PC-9 (cell line): ENCODE measurements at regions of chr19 and their contacts with region 1.

Region 1: GRCh38 chr19:11293433-11294389 is 2.2 kb upstream of the TSPAN16 start:
- DNase-seq: peak; percentile 93 to 99
- H3K4me3 ChIP-seq: peak overlapping the region; percentile 37; the same call in 1 of the 2 replicates
- H3K27ac ChIP-seq: 0 out of 2 replicates have a peak overlapping the region, but pooled peaks have one; percentile 30
- H3K4me1 ChIP-seq: peaks cover 30% of the 10 kb centered on the region
- H3K27me3 ChIP-seq: no peaks in the 10 kb centered on the region
- CTCF ChIP-seq: peak; percentile 99

Region 2: GRCh38 chr19:11264452-11265176 is 29.1 kb before region 1 on chr19:
- CTCF ChIA-PET with region 1: interaction called, 16 read pairs
- POLR2A ChIA-PET with region 1: no interaction called
- intact Hi-C with region 1: no loop called
- DNase-seq: peak; percentile 90 to 94
- H3K4me3 ChIP-seq: no peak overlapping the region
- H3K27ac ChIP-seq: peak overlapping the region; percentile 62
- H3K4me1 ChIP-seq: peaks cover 24% of the 10 kb centered on the region
- H3K27me3 ChIP-seq: no peaks in the 10 kb centered on the region
- CTCF ChIP-seq: no peak

Region 3: DNA sequence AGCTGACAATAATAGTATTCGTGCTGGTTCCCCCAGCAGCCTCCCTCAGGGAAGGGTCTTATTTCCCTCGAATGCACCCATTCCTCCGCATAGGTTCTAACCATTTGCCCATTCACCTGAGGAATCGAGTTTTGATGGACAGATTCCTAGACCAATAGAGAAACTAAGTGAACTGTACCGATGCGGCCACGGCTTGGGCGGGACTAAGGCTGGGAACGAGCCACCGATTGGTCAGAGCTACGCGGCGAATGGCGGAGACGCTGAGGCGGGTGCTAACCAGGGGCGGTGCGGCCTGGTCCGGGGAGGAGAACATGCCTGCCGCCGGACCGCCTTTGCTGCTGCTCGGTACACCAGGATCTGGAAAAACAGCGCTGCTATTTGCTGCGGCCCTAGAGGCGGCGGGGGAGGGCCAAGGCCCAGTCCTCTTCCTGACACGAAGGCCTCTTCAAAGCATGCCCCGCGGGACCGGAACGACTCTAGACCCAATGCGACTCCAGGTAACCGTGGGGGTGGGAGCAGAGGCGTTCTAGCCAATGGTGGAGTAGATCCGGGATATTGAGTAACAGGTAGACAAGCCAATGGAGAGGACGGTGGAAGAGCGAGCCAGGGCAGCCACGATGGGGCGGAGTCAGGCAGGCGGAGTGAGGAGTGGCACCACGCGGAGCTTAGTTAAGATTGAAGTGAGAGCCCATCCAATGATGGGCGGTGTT is 80.9 kb after region 1 on chr19 and contains the start of gene SWSAP1:
- CTCF ChIA-PET with region 1: interaction called, 10 read pairs
- POLR2A ChIA-PET with region 1: interaction called, 11 read pairs
- intact Hi-C with region 1: loop called (anchors 2 kb)
- DNase-seq: peak; percentile 97 to 99
- H3K4me3 ChIP-seq: peak within 1 kb of the TSS; percentile 62
- H3K27ac ChIP-seq: peak within 1 kb of the TSS; percentile 75
- H3K4me1 ChIP-seq: peaks cover 44% of the 10 kb centered on the region
- H3K27me3 ChIP-seq: no peaks in the 10 kb centered on the region
- CTCF ChIP-seq: no peak
- total RNA-seq, gene SWSAP1: 4.6 and 4.8 TPM in 2 replicates

Region 4: GRCh38 chr19:11482384-11483050 is 188.8 kb after region 1 on chr19:
- CTCF ChIA-PET with region 1: no interaction called
- POLR2A ChIA-PET with region 1: no interaction called
- intact Hi-C with region 1: loop called (anchors 2 kb)
- DNase-seq: peak; percentile 47 to 73
- H3K4me3 ChIP-seq: no peak overlapping the region
- H3K27ac ChIP-seq: no peak overlapping the region
- H3K4me1 ChIP-seq: no peaks in the 10 kb centered on the region
- H3K27me3 ChIP-seq: no peaks in the 10 kb centered on the region
- CTCF ChIP-seq: peak; percentile 95

Region 5: DNA sequence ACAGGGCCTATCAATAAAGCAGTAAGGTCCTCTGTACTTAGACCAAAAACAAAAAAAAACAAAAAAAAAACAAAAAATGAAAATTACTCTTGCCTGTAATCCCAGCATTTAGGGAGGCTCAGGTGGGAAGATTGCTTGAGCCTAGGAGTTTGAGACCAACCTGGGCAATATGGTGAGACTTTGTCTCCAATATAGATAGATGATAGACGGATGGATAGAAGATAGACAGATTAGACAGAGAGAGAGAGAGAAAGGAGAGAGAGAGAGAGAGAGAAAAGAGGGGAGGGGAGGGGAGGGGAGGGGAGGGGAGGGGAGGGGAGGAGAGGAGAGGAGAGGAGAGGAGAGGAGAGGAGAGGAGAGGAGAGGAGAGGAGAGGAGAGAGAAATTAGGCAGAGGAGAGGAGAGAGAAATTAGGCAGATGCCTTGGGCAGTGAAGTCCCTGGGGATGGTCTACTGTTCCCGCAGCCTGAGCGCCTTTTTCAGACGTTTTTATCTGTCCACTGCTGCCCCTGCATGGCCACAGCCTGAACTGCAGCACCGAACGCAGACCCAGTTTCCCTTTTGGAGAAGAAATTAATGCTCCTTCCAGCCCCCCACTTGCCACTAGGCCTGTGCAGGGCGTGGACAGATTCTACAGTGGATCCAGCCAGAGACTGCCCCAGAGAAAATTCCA is 293.7 kb after region 1 on chr19:
- CTCF ChIA-PET with region 1: no interaction called
- POLR2A ChIA-PET with region 1: no interaction called
- intact Hi-C with region 1: loop called (anchors 2 kb)
- DNase-seq: peak in 1 of 2 experiments; percentile 76
- H3K4me3 ChIP-seq: no peak overlapping the region
- H3K27ac ChIP-seq: no peak overlapping the region
- H3K4me1 ChIP-seq: 0 out of 2 replicates have a peak, but pooled peaks cover 4% of the 10 kb centered on the region
- H3K27me3 ChIP-seq: no peaks in the 10 kb centered on the region
- CTCF ChIP-seq: peak; percentile 93